ENCODE measurements at regions of chr19 and their contacts with region 1.

Region 1: GRCh38 chr19:47112997-47113849 is at the start of gene ZC3H4:
- DNase-seq: peak; percentile 97 to 100 (median 100)
- ATAC-seq: peak; percentile 81 to 84
- H3K4me3 Mint-ChIP-seq: peak within 1 kb of the TSS; percentile 92 to 100 (median 98)
- H3K27ac Mint-ChIP-seq: peak within 1 kb of the TSS; percentile 99 to 100 (median 99)
- H3K4me1 Mint-ChIP-seq: peaks cover 17 to 39% (median 33%) of the 10 kb centered on the region in 4 donors
- H3K27me3 Mint-ChIP-seq: peaks cover 0 to 2% (median 0%) of the 10 kb centered on the region in 5 donors
- polyA plus RNA-seq, gene ZC3H4: 0.86 to 2.4 (median 2.0) TPM

Region 2: DNA sequence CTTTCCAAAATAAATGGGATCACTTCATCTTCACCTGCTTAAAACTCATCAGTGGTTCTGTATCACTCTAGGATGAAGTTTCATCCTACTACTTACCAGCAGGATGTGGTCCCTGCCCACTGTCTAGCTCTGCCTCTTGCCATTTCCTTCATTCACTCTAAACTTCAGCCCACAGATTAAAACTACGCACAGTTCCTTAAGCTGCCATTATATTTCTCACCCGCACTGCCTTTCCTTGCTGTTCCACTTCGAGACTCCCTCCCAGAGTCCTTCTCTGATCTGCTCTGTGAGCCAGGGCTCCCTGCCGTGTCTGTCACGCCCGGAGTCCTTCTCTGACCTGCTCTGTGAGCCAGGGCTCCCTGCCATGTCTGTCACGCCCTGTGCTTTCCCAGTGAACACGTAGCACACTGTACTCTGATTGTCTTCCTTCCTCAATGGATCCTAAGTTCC is 145.6 kb before region 1 on chr19:
- POLR2A ChIA-PET with region 1: no interaction called
- DNase-seq: peak in 5 of 10 donors; percentile 8 to 39 (median 29)
- ATAC-seq: peak; percentile 76 to 96
- H3K4me3 Mint-ChIP-seq: peak overlapping the region; percentile 32 to 80 (median 56)
- H3K27ac Mint-ChIP-seq: peak overlapping the region; percentile 19 to 83 (median 62)
- H3K4me1 Mint-ChIP-seq: peaks cover 17 to 41% (median 33%) of the 10 kb centered on the region in 4 donors
- H3K27me3 Mint-ChIP-seq: no peaks in the 10 kb centered on the region

Region 3: DNA sequence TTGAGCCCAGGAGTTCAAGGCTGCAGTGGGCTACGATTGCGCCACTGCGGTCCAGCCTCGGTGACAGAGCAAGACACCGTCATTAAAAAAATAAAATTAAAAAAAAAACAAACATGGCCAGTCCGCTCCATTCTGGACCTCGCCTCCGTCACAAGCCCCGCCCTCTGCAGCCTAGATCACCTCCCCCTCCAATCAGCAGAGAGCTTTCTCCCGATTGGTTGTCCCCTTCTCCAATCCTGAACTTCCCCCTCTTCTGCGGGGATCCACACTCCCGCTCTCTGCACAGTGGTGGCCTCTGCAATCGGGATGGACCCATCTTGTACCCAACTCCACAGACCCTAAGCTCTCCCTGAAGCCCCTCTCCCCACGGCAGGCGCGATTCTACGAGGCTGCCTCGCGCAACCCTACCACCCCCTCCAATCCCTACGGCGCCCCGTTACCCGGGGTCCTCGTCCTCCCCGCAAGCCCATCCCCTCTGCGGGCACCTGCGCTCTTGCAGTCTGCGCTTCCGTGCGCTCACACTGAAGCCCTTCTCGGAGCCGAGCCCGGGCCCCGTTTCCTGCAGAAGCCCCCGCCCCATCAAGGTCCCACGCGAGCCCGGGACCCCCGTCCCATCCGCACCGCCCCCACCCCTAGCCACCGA is 65.3 kb before region 1 on chr19:
- POLR2A ChIA-PET with region 1: interaction called, 19 read pairs
- DNase-seq: peak; percentile 41 to 77 (median 56)
- ATAC-seq: peak; percentile 50 to 54
- H3K4me3 Mint-ChIP-seq: peak overlapping the region; percentile 89 to 98 (median 95)
- H3K27ac Mint-ChIP-seq: peak overlapping the region; percentile 81 to 97 (median 94)
- H3K4me1 Mint-ChIP-seq: peaks cover 11 to 24% (median 19%) of the 10 kb centered on the region in 4 donors
- H3K27me3 Mint-ChIP-seq: no peaks in the 10 kb centered on the region

Region 4: GRCh38 chr19:47094557-47095475 is 18.4 kb before region 1 on chr19:
- POLR2A ChIA-PET with region 1: interaction called, 110 read pairs
- DNase-seq: peak in 4 of 10 donors; percentile 21 to 53 (median 36)
- ATAC-seq: peak; percentile 75 to 82
- H3K4me3 Mint-ChIP-seq: peak overlapping the region in 8 of 10 donors; percentile 18 to 78 (median 56)
- H3K27ac Mint-ChIP-seq: peak overlapping the region; percentile 88 to 100 (median 94)
- H3K4me1 Mint-ChIP-seq: peaks cover 17 to 64% (median 48%) of the 10 kb centered on the region in 4 donors
- H3K27me3 Mint-ChIP-seq: no peaks in the 10 kb centered on the region

Region 5: GRCh38 chr19:47145639-47146486 is 32.6 kb after region 1 on chr19:
- POLR2A ChIA-PET with region 1: interaction called, 18 read pairs
- DNase-seq: peak in 8 of 10 donors; percentile 29 to 80 (median 49)
- ATAC-seq: peak; percentile 95 to 98
- H3K4me3 Mint-ChIP-seq: peak overlapping the region; percentile 55 to 83 (median 74)
- H3K27ac Mint-ChIP-seq: peak overlapping the region; percentile 82 to 94 (median 91)
- H3K4me1 Mint-ChIP-seq: peaks cover 28 to 82% (median 56%) of the 10 kb centered on the region in 4 donors
- H3K27me3 Mint-ChIP-seq: no peaks in the 10 kb centered on the region

Region 6: DNA sequence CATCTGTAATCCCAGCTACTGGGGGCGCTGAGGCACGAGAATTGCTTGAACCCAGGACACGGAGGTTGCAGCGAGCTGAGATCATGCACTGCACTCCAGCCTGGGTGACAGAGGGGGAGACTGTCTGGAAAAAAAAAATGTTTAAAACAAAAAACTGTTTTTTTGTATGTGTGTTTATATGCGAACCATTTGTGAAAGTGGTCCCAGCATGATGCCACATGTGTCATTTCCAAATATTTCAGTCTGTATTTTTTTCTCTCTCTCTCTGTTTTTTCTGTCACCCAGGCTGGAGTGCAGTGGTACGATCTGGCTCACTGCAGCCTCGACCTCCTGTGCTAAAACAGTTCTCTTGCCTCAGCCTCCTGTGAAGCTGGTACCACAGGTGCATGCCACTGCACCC is 54.8 kb after region 1 on chr19:
- POLR2A ChIA-PET with region 1: no interaction called
- DNase-seq: no peak
- ATAC-seq: no peak
- H3K4me3 Mint-ChIP-seq: no peak overlapping the region
- H3K27ac Mint-ChIP-seq: peak overlapping the region in 3 of 10 donors; percentile 4 to 31 (median 19)
- H3K4me1 Mint-ChIP-seq: peaks cover 11 to 48% (median 21%) of the 10 kb centered on the region in 4 donors
- H3K27me3 Mint-ChIP-seq: no peaks in the 10 kb centered on the region

Region 7: DNA sequence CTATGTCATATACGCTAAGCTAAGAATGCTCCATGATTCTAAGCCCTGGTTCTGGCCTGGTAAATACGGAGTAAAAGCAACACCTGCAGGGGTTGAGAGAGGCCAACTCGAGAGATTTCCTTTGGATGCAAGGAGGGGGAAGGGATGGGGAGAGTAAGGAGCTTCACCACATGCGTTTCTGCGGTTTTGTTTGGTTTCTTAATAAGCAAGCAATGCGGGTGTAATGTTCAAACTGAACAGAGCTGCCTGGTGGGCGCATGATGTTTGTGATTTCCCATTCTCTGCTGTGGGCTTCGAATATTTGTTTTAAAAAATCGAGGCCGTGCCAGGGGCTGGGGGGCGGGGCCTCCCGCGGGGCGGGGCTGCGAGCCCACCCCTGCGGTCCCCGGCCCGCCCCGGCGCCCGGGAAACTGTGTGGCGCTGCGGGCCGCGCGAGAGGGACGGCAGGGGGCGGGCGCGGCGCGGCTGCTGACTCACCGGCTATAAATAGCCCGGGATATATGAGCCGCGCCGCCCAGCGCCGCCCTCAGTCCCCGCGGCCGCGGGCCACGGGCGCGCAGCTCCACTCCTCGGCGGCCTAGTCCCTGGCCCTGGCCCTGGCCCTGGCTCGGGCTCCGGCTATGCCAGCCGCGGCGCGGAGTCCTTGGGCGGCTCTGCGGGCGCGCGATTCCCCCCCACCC is 112.7 kb after region 1 on chr19:
- POLR2A ChIA-PET with region 1: interaction called, 17 read pairs
- DNase-seq: peak; percentile 81 to 91 (median 86)
- ATAC-seq: peak; percentile 55 to 62
- H3K4me3 Mint-ChIP-seq: peak overlapping the region in 9 of 10 donors; percentile 61 to 89 (median 75)
- H3K27ac Mint-ChIP-seq: peak overlapping the region; percentile 6 to 94 (median 88)
- H3K4me1 Mint-ChIP-seq: peaks cover 6 to 21% (median 12%) of the 10 kb centered on the region in 4 donors
- H3K27me3 Mint-ChIP-seq: no peaks in the 10 kb centered on the region

Measured in naive thymus-derived CD8-positive, alpha-beta T cell (primary cell).